Astrocyte of the cerebellum (primary cell): ENCODE measurements at regions of chr18 and their contacts with region 1.

Region 1: GRCh38 chr18:3008541-3008940 is 4.4 kb downstream of the LPIN2 start:
- DNase-seq: no peak
- H3K4me3 ChIP-seq: no peak overlapping the region
- CTCF ChIP-seq: no peak

Region 2: GRCh38 chr18:3062798-3063680 is 54.5 kb after region 1 on chr18:
- in situ Hi-C with region 1: loop called (anchors 5 kb)
- DNase-seq: no peak
- H3K4me3 ChIP-seq: no peak overlapping the region
- CTCF ChIP-seq: peak; percentile 85

Region 3: GRCh38 chr18:3088449-3088848 is 79.9 kb after region 1 on chr18:
- in situ Hi-C with region 1: no loop called
- DNase-seq: no peak
- H3K4me3 ChIP-seq: no peak overlapping the region
- CTCF ChIP-seq: no peak